A549 (cell line): ENCODE measurements at regions of chr17 and their contacts with region 1.

Region 1: DNA sequence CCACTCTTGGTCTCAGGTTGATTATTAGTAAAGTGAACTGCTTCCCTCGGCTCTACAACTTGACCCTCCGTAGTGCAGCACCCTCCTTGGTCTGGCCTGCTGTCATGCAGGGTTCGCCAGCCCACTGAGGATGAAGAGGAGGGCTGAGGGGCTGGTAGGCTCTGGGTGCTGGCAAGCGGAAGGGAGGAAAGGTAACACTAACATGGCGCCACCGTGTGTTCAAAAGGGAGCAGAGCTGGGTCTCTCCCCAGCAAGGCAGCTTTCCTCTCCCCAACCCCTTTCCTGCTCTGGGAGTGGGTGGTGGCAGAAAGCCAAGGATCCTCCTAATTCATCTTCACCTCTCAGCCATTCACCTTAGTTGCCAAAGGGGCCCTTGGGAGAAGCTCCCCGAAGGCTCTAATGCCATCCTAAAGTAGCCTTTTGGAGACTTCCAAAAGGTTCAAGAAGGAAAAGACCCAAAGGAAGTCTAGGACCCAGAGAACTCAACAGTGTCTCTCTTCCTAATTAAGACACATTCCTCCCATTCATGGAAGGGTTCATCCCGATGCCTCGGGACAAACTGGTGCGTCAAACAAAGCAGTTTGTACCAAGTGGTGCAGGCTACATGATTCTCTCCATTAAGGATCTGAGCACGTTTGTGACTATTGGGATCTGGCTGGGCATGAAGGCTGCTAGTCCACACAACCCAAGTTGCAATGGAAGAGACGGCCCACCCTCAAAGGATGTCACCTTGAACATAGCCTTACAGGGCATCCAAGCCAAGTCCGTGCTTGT is 90.8 kb upstream of the TOB1 start:
- DNase-seq: peak; percentile 69 to 71
- ATAC-seq: peak; percentile 73 to 87
- H3K4me3 ChIP-seq: no peak overlapping the region
- H3K27ac ChIP-seq: peak overlapping the region; percentile 29 to 81; a peak in 3 of 6 replicates
- H3K4me1 ChIP-seq: peaks cover 23% of the 10 kb centered on the region
- CTCF ChIP-seq: peak; percentile 87
- EP300 ChIP-seq: no peak
- POLR2A ChIP-seq: no peak
- RAD21 ChIP-seq: peak; percentile 80 to 85

Region 2: DNA sequence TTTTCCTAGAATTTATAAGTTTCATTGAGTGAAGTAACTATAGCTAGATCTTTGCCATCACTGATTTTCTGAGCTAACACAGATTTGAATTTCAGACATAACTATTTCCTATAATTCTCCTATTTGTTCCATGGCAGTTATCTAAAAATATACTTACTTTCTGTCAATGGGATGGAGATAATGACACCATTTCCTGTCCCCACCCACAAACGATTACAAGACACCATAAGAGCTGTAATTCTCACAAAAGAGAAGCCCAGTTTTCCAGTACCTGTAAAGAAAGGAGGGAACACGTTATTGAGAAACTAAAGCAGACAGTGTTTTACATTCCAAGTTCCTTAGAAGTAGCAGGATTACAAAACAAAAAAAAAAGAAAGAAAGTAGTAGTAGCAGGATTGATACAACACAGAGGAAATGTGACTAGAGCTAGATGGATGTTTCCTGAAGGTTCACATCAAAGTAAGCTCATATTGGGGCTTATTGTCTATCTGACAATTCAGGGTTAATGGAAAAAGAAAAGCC is 20.1 kb after region 1 on chr17:
- CTCF ChIA-PET with region 1: interaction called, 10 read pairs
- POLR2A ChIA-PET with region 1: no interaction called
- DNase-seq: no peak
- ATAC-seq: no peak
- H3K4me3 ChIP-seq: no peak overlapping the region
- H3K27ac ChIP-seq: no peak overlapping the region
- H3K4me1 ChIP-seq: no peaks in the 10 kb centered on the region
- CTCF ChIP-seq: no peak
- EP300 ChIP-seq: no peak
- POLR2A ChIP-seq: no peak
- RAD21 ChIP-seq: no peak

Region 3: DNA sequence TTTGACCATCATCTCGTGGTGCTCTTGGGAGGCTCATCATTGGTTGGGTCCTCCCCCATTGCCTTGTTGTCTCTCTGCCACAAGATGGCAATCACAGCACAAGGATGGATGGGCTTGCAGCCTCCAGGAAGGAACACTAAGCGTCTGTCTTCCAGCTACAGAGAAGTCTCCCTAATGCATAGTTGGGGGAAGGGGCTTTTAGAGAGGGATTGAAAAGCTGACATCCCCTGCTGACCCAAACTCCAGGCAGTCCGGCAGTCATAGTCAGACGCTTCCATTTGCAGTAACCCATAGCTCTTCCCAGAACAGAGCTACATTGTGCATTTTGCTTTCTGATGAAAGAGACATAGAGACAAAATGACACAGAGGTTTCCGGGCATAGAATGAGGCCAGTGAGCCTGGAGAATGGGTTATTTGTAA is 414.8 kb after region 1 on chr17:
- CTCF ChIA-PET with region 1: no interaction called
- POLR2A ChIA-PET with region 1: no interaction called
- DNase-seq: peak; percentile 86 to 88
- ATAC-seq: peak; percentile 96 to 98
- H3K4me3 ChIP-seq: no peak overlapping the region
- H3K27ac ChIP-seq: peak overlapping the region; percentile 37 to 59; a peak in 4 of 6 replicates
- H3K4me1 ChIP-seq: 0 out of 3 replicates have a peak, but pooled peaks cover 3% of the 10 kb centered on the region
- CTCF ChIP-seq: peak; percentile 94
- EP300 ChIP-seq: no peak
- POLR2A ChIP-seq: no peak
- RAD21 ChIP-seq: peak; percentile 98 to 100